IMR-90 (cell line): ENCODE measurements at regions of chr4 and their contacts with region 1.

Region 1: DNA sequence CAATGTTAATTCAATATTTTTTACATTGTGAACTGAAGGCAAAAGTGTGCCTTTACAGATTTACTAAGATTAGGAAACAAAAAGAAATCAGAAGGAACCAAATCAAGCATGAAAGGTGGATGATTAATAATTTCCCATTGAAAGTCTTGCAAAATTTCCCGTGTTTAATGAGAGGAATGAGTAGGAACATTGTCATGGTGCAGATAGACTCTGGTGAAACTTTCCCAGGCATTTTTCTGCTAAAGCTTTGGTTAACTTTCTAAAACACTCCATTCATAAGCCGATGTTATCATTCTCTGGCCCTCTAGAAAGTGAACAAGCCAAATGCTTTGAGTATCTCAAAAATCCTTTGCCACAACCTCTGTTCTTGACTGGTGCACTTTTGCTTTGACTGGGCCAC is 1522.8 kb upstream of the PABPC4L start:
- DNase-seq: no peak
- ATAC-seq: no peak
- H3K4me3 ChIP-seq: no peak overlapping the region
- H3K27ac ChIP-seq: no peak overlapping the region
- H3K4me1 ChIP-seq: no peaks in the 10 kb centered on the region
- H3K27me3 ChIP-seq: no peaks in the 10 kb centered on the region
- CTCF ChIP-seq: no peak
- POLR2A ChIP-seq: no peak
- RAD21 ChIP-seq: no peak

Region 2: DNA sequence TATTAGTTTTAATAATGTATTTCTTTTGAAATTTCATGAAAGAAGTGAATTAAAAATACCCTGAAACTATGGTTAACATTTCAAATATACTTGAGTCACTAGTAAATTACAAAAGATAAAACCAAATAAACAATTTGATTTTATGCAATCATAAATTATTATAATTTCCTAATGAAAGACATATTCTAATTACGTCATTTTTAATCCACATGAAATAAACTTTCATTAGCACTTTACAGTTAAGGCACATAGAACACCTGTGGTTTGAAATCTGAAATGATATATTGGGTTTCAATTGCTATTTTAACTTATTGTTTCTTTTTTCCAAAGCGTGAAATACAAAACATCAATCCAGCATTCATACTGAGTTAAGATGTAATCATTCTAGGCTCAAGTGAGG is 30.4 kb before region 1 on chr4:
- CTCF ChIA-PET with region 1: no interaction called
- POLR2A ChIA-PET with region 1: no interaction called
- dilution Hi-C with region 1: no loop called
- in situ Hi-C with region 1: no loop called
- intact Hi-C with region 1: loop called (anchors 1 kb)
- DNase-seq: no peak
- ATAC-seq: no peak
- H3K4me3 ChIP-seq: no peak overlapping the region
- H3K27ac ChIP-seq: no peak overlapping the region
- H3K4me1 ChIP-seq: no peaks in the 10 kb centered on the region
- H3K27me3 ChIP-seq: no peaks in the 10 kb centered on the region
- CTCF ChIP-seq: no peak
- POLR2A ChIP-seq: no peak
- RAD21 ChIP-seq: no peak